ENCODE measurements at regions of chr20 and their contacts with region 1.

Region 1: DNA sequence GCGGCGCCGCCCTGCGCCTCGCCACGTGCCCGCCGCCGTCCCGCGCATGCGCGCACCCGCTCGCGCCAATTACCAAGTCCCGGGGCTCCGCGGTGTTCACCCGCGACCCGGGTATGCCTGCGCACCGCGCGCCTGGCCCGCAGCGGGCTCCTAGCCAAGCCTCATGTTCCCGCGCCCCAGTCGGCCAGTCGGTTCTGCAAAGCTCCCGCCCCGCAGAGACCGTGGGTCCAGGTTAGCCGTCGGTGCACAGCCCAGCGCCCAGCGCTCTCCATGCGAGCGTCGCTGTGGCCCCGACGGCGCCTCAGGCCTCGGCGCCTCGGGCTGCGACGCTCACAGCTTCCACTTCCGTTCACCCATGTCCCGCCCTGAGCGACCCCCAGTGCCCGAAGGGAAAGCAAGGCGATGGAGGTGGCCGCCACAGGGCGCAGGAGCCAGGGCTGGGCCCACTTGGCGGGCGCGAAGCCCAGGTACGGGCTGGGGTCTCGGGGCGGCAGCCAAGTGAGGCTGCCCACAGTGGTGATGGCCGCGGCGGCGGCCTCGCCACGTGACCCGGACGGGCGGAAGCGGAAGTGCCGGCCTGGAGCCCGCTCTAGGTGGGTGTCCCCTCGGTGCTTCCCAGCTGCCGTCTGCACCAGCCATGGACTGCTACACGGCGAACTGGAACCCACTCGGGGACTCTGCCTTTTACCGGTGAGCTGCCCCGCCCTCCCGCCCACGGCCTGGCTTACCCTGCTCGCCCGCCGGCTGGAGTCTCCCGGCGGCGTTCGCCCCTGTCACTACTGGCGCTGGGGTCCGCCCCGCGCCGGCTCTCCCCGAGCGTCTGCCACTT is at the starts of genes PCED1A and VPS16:
- DNase-seq: peak; percentile 96
- ATAC-seq: peak; percentile 97
- H3K4me3 Mint-ChIP-seq: peak within 1 kb of the TSS; percentile 83
- H3K27ac Mint-ChIP-seq: peak within 1 kb of the TSS; percentile 85
- H3K4me1 Mint-ChIP-seq: peaks cover 20% of the 10 kb centered on the region
- H3K27me3 Mint-ChIP-seq: no peaks in the 10 kb centered on the region
- total RNA-seq, gene PCED1A: 39.9 to 43.3 TPM
- total RNA-seq, gene VPS16: 54.6 to 56.7 TPM

Region 2: DNA sequence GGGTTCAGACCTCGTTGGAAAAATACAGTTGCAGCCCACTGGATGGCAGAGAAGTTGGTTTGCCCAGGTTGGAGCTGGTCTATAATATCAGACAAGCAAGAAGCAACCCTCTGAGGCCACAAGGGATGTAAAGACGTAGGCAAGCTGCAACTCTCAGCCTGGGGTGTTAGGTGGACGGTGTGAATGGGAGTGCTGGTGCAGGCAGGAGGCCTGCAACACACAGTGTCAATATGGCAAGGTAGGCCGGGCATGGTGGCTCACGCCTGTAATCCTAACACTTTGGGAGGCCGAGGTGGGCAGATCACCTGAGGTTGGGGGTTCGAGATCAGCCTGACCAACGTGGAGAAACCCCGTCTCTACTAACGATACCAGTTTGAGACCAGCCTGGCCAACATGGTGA is 10.7 kb after region 1 on chr20:
- POLR2A ChIA-PET with region 1: interaction called, 14 read pairs
- DNase-seq: no peak
- ATAC-seq: no peak
- H3K4me3 Mint-ChIP-seq: no peak overlapping the region
- H3K27ac Mint-ChIP-seq: peak overlapping the region; percentile 25
- H3K4me1 Mint-ChIP-seq: peaks cover 22% of the 10 kb centered on the region
- H3K27me3 Mint-ChIP-seq: no peaks in the 10 kb centered on the region

Region 3: DNA sequence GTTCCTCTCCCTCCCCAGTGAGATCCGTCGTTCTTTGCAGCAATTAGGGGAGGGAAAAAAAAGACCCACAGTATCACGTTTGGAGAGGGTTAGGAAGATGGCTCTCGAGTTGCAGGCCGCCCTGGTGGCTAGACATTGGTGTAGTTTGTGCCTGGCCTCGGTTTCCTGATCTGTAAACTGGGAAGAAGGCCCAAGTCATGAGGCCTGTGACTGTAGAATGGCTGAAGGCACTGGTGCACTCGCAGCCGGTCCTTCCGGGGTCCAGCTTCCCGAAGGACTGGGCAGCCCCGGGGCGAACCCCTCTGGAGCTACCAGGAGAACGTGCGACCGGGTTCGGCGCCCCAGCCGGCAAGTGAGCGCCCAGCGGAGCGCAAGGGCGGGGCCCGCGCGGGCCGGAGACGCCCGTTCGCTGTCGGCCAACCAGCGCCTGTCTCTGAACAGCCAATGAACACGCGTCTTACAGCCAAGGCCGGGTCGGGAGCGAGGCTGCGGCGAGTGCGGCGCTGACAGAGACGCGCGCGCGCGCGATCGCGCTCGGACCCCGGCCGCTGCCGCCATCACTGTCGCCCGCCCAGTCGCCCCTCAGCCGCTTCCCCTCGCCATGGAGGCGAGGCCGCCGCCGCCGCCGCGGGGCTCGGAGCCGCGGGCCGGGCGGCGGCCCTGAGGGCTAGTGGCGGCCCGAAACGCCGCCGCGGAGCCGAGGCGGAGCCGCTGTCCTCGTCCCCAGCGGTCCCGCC is 32.8 kb after region 1 on chr20 and contains the start of gene PTPRA:
- POLR2A ChIA-PET with region 1: interaction called, 15 read pairs
- DNase-seq: peak; percentile 94
- ATAC-seq: peak; percentile 89
- H3K4me3 Mint-ChIP-seq: peak within 1 kb of the TSS; percentile 90
- H3K27ac Mint-ChIP-seq: peak within 1 kb of the TSS; percentile 93
- H3K4me1 Mint-ChIP-seq: peaks cover 42% of the 10 kb centered on the region
- H3K27me3 Mint-ChIP-seq: no peaks in the 10 kb centered on the region
- total RNA-seq, gene PTPRA: 68.1 to 68.8 TPM

Measured in activated naive CD8-positive, alpha-beta T cell treated with anti-CD3 and anti-CD28 coated beads, Interleukin-2, amount 10 ng/mL, durations not matched to agents 7 days and 5 days (primary cell).